ENCODE measurements at regions of chr11 and their contacts with region 1.

Region 1: GRCh38 chr11:131674051-131674755 is 303.8 kb downstream of the NTM start:
- DNase-seq: peak; percentile 86
- ATAC-seq: peak; percentile 97
- H3K4me3 ChIP-seq: no peak overlapping the region
- H3K27ac ChIP-seq: no peak overlapping the region
- H3K4me1 ChIP-seq: peaks cover 2% of the 10 kb centered on the region; the same call in 1 of the 2 replicates
- H3K27me3 ChIP-seq: peaks cover 3% of the 10 kb centered on the region; the same call in 1 of the 2 replicates
- CTCF ChIP-seq: peak; percentile 99
- POLR2A ChIP-seq: peak; percentile 56; the same call in 1 of the 2 replicates
- RAD21 ChIP-seq: peak; percentile 98

Region 2: DNA sequence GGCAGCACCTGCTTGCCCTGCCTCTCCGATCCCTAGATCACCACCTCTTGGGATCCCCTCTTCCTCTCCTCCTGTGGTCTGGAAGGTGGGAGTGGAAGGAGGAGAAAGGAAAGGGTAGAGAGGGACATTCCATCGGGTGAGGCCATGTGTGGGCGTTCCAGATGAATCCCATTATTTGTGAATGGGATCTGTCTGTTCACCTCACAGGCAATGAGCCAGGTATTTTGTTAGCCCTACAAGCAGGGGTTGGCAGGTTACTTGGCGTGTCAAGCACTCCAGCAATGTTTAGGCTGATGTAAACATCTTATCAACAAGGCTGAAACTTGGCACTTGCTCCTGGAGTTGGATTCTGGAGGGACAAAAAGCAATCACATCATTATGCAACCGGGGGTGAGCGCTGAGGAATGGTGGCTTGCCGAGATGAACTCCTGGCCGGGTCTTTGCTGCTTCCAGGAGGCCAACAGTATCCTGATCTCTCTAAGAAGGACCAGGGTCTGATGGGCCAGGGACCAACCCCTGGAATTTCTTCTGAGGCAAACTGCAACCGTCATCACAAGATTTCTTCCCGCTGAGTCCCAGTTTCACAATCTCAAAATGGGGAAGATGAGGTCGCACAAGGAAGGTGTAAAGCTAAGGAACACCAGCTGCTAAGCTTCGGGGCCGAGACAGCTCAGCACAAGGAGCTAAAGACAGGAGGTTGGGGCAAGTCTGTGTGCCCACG is 1253.6 kb before region 1 on chr11:
- CTCF ChIA-PET with region 1: no interaction called
- POLR2A ChIA-PET with region 1: no interaction called
- dilution Hi-C with region 1: no loop called
- in situ Hi-C with region 1: no loop called
- intact Hi-C with region 1: no loop called
- DNase-seq: peak; percentile 82
- ATAC-seq: peak; percentile 65
- H3K4me3 ChIP-seq: no peak overlapping the region
- H3K27ac ChIP-seq: peak overlapping the region; percentile 93
- H3K4me1 ChIP-seq: peaks cover 30% of the 10 kb centered on the region
- H3K27me3 ChIP-seq: peaks cover 20% of the 10 kb centered on the region
- CTCF ChIP-seq: no peak
- POLR2A ChIP-seq: no peak
- RAD21 ChIP-seq: no peak

Region 3: GRCh38 chr11:130924770-130925169 is 749.4 kb before region 1 on chr11:
- CTCF ChIA-PET with region 1: no interaction called
- POLR2A ChIA-PET with region 1: no interaction called
- dilution Hi-C with region 1: no loop called
- in situ Hi-C with region 1: loop called (anchors 5 kb)
- intact Hi-C with region 1: loop called (anchors 1 kb)
- DNase-seq: no peak
- ATAC-seq: peak; percentile 12; the same call in 1 of the 2 replicates
- H3K4me3 ChIP-seq: no peak overlapping the region
- H3K27ac ChIP-seq: no peak overlapping the region
- H3K4me1 ChIP-seq: no peaks in the 10 kb centered on the region
- H3K27me3 ChIP-seq: no peaks in the 10 kb centered on the region
- CTCF ChIP-seq: no peak
- POLR2A ChIP-seq: no peak
- RAD21 ChIP-seq: no peak

Region 4: GRCh38 chr11:131064373-131064991 is 609.7 kb before region 1 on chr11:
- CTCF ChIA-PET with region 1: interaction called, 23 read pairs
- POLR2A ChIA-PET with region 1: no interaction called
- dilution Hi-C with region 1: no loop called
- in situ Hi-C with region 1: loop called (anchors 10 kb)
- intact Hi-C with region 1: loop called (anchors 1 kb)
- DNase-seq: peak; percentile 70
- ATAC-seq: peak; percentile 99
- H3K4me3 ChIP-seq: no peak overlapping the region
- H3K27ac ChIP-seq: no peak overlapping the region
- H3K4me1 ChIP-seq: no peaks in the 10 kb centered on the region
- H3K27me3 ChIP-seq: peaks cover 2% of the 10 kb centered on the region
- CTCF ChIP-seq: peak; percentile 89
- POLR2A ChIP-seq: no peak
- RAD21 ChIP-seq: peak; percentile 96

Region 5: GRCh38 chr11:131579932-131580387 is 94.2 kb before region 1 on chr11:
- CTCF ChIA-PET with region 1: interaction called, 23 read pairs
- POLR2A ChIA-PET with region 1: interaction called, 3 read pairs
- dilution Hi-C with region 1: no loop called
- in situ Hi-C with region 1: no loop called
- intact Hi-C with region 1: loop called (anchors 1 kb)
- DNase-seq: peak; percentile 40
- ATAC-seq: peak; percentile 83
- H3K4me3 ChIP-seq: no peak overlapping the region
- H3K27ac ChIP-seq: no peak overlapping the region
- H3K4me1 ChIP-seq: no peaks in the 10 kb centered on the region
- H3K27me3 ChIP-seq: peaks cover 7% of the 10 kb centered on the region; the same call in 1 of the 2 replicates
- CTCF ChIP-seq: peak; percentile 48
- POLR2A ChIP-seq: no peak
- RAD21 ChIP-seq: peak; percentile 48

Region 6: DNA sequence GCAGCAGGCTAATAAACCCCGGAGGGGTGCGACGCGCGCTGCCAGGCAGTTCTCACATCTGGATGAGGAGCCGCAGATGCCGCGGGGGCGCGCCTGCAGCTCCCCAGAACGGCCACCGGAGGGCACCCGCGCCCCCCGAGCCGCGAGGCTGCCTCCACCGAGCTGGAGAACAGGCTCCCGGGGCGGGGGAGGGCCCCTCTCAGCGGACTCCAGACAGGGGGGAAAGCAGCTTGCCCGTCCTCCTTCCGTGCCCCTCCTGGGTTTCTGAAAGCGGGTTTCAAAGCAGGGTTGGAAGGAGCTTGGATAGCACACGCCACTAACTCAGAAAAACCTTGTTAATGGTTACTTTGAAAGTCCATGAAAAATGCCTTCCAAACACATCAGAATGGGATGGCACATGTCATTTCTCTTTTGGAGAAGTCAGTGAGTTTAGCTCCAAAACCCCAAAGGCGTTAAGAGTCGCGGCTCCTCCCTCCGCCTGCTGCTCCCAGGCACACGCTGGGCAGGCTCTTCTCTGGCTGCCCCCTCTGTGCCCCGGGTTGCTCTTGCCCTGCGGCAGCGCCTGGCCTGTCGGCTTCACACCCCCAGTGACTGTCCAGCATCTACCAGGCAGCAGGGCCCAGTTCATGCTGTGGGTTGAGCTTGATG is 14.0 kb after region 1 on chr11:
- CTCF ChIA-PET with region 1: interaction called, 11 read pairs
- POLR2A ChIA-PET with region 1: no interaction called
- dilution Hi-C with region 1: no loop called
- in situ Hi-C with region 1: no loop called
- intact Hi-C with region 1: no loop called
- DNase-seq: peak; percentile 41
- ATAC-seq: peak; percentile 96
- H3K4me3 ChIP-seq: peak overlapping the region; percentile 36
- H3K27ac ChIP-seq: no peak overlapping the region
- H3K4me1 ChIP-seq: peaks cover 3% of the 10 kb centered on the region; the same call in 1 of the 2 replicates
- H3K27me3 ChIP-seq: peaks cover 17% of the 10 kb centered on the region
- CTCF ChIP-seq: peak; percentile 80
- POLR2A ChIP-seq: no peak
- RAD21 ChIP-seq: peak; percentile 73

Measured in IMR-90 (cell line).